Activated T-helper 2 cell treated with anti-CD3 and anti-CD28 coated beads, Interferon-gamma antibody, Interleukin-2, Interleukin-4, amounts not matched to agents 10 μg/mL and 5 μg/mL and 100 μg/mL, durations not matched to agents 14 hours and 24 hours and 36 hours (primary cell): ENCODE measurements at regions of chr19 and their contacts with region 1.

Region 1: GRCh38 chr19:11766597-11767591 is at the start of gene ZNF441:
- DNase-seq: peak; percentile 89
- H3K4me3 Mint-ChIP-seq: peak within 1 kb of the TSS; percentile 96
- H3K27ac Mint-ChIP-seq: peak within 1 kb of the TSS; percentile 93
- H3K4me1 Mint-ChIP-seq: peaks cover 11% of the 10 kb centered on the region
- H3K27me3 Mint-ChIP-seq: peaks cover 3% of the 10 kb centered on the region
- total RNA-seq, gene ZNF441: 4.2 and 4.9 TPM in 2 replicates

Region 2: GRCh38 chr19:11738746-11739620 is 27.9 kb before region 1 on chr19 and contains the start of gene ZNF823:
- intact Hi-C with region 1: loop called (anchors 1 kb)
- DNase-seq: peak; percentile 95
- H3K4me3 Mint-ChIP-seq: peak within 1 kb of the TSS; percentile 94
- H3K27ac Mint-ChIP-seq: peak within 1 kb of the TSS; percentile 86
- H3K4me1 Mint-ChIP-seq: peaks cover 15% of the 10 kb centered on the region
- H3K27me3 Mint-ChIP-seq: peaks cover 2% of the 10 kb centered on the region
- total RNA-seq, gene ZNF823: 3.6 TPM in 2 replicates

Region 3: DNA sequence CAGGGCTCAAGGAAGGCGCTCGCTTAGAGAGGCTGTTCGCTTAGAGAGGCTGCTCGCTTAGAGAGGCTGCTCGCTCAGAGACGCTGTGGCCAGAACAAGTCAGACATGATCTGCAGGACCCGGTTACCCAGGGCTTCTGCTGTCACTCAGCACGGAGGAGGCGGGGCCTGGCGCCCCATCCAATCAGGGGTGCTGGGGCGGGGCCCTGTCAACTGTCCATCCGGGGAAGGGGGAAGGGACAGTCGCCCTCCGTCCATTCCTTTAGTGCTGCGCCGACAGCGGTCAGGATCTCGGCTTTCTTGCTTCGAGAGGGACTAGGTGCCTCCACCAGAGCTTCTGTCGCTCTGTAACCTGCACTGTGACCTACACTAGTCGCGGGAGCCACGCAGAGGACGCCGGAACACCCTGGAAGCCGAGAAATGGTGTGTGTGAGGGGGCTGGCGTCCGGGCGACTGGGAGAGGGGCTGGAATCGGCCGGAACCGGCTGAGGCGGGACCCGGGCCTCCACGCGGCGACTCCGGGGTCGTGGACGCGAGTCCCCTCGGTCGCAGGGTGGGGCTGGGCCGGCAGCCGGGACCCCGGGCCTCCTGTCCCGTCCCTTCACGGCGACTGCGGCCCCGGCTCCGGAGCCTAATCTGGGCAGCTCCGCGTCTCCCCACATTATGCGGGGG is 47.3 kb after region 1 on chr19 and contains the start of gene ZNF440:
- intact Hi-C with region 1: loop called (anchors 2 kb)
- DNase-seq: peak; percentile 85
- H3K4me3 Mint-ChIP-seq: peak within 1 kb of the TSS; percentile 88
- H3K27ac Mint-ChIP-seq: peak within 1 kb of the TSS; percentile 71
- H3K4me1 Mint-ChIP-seq: peaks cover 14% of the 10 kb centered on the region
- H3K27me3 Mint-ChIP-seq: no peaks in the 10 kb centered on the region
- total RNA-seq, gene ZNF440: 10.8 and 11.0 TPM in 2 replicates

Region 4: GRCh38 chr19:11924886-11925650 is 158.2 kb after region 1 on chr19 and contains the start of gene ZNF700:
- intact Hi-C with region 1: no loop called
- DNase-seq: peak; percentile 91
- H3K4me3 Mint-ChIP-seq: peak within 1 kb of the TSS; percentile 95
- H3K27ac Mint-ChIP-seq: peak within 1 kb of the TSS; percentile 98
- H3K4me1 Mint-ChIP-seq: peaks cover 23% of the 10 kb centered on the region
- H3K27me3 Mint-ChIP-seq: peaks cover 2% of the 10 kb centered on the region
- total RNA-seq, gene ZNF700: 14.5 and 14.6 TPM in 2 replicates

Region 5: DNA sequence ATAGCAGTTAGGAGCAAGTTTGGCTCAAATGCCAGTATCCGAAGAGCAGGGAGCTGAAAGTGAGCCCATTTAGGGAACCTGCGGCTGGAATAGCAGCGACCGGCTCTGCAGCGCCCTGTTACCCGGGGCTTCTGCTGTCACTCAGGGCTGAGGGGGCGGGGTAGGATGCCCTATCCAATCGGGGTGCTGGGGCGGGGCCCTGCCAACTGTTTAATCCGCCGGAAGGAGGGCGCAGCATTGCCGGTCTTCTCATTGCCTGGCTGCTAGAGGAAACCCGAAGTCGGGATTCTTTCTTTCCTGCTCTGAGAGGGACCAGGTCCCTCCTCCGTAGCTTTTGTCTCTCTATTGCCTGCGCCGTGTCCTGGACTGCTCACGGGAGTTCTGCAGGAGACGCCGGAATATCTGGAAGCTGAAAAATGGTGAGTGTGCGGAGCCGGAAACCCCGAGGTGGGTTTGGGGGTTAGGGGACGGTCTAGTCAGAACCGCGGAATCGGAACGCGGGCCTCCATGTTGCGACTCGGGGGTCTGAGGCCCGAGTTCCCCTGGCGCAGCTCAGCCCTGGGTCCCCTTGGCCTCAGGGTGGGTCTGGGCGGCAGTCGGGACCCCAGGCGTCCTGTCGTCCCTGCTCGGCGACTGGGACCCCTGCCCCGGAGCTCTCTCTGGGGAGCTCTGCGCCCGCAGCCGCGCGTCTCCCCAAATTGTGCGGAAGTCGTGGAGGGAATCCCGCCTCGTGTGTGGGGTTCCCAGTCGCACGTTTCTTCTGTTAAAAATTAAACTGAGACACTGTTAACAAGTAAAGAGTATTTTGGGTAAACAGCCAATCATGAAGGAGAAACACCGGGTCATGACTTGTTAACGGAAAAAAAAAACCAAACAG is 220.7 kb after region 1 on chr19:
- intact Hi-C with region 1: no loop called
- DNase-seq: peak; percentile 87
- H3K4me3 Mint-ChIP-seq: peak overlapping the region; percentile 98
- H3K27ac Mint-ChIP-seq: peak overlapping the region; percentile 97
- H3K4me1 Mint-ChIP-seq: peaks cover 15% of the 10 kb centered on the region
- H3K27me3 Mint-ChIP-seq: no peaks in the 10 kb centered on the region